ENCODE measurements at regions of chr3 and their contacts with region 1.

Region 1: DNA sequence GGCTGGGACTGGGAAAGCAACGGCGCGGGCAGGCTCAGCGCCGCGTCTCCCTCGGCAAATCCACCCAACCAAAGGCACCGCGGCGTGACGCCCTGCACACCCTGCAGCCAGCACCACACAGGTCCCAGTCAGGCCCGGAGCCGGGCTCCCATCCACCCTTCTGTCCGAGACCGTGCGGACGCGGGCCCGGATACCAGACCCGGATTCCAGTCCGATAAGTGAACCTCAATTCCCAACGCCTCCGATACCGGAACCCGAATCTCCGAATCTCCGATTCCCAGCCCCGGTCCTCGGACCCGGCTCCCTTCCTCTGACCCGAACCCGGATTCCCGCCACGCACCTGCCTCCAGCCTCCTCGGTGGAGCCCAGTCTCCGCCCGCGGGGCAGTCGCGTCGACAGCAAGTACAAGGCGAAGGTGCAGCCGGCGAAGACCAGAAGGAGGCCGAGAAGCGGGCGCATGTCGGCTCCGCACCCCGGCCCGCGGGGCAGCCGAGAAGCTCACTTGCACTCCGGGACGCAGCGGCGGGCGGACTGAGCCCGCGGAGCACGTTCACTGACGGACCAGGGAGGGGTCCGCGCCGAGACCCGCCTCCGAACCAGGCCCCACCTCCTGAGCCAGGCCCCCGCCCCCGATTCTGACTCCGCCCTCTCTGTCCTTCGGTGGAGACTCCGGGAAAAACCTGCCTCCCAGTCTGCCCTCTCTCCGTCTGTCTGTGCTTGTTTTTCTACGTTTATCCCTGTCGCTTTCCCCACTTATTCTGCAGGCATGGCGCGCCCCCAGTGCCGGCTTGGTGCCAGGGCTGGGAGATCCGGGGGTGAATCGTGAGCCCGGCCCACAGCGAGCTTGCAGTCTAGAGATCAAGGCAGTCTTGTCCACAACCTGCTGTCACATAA is at the start of gene TMEM41A:
- DNase-seq: peak; percentile 92 to 96
- H3K4me3 ChIP-seq: peak within 1 kb of the TSS; percentile 84 to 88
- H3K27ac ChIP-seq: peak within 1 kb of the TSS; percentile 78 to 85
- H3K4me1 ChIP-seq: peaks cover 0 to 18% (median 14%) of the 10 kb centered on the region in 4 donors
- H3K27me3 ChIP-seq: no peaks in the 10 kb centered on the region
- CTCF ChIP-seq: peak in 1 of 2 experiments; percentile 10

Region 2: GRCh38 chr3:185585859-185586685 is 87.3 kb after region 1 on chr3 and contains the start of gene SENP2:
- intact Hi-C with region 1: loop called (anchors 10 kb)
- DNase-seq: peak; percentile 99 to 100
- H3K4me3 ChIP-seq: peak within 1 kb of the TSS; percentile 69 to 90
- H3K27ac ChIP-seq: peak within 1 kb of the TSS; percentile 90 to 97
- H3K4me1 ChIP-seq: peaks cover 0 to 28% (median 16%) of the 10 kb centered on the region in 4 donors
- H3K27me3 ChIP-seq: no peaks in the 10 kb centered on the region
- CTCF ChIP-seq: peak in 1 of 2 experiments; percentile 12

Measured in tibial artery (tissue), 4 donors.